ENCODE measurements at regions of chr1 and their contacts with region 1.

Region 1: GRCh38 chr1:151399890-151400495 is 620 bp downstream of the PSMB4 start:
- DNase-seq: no peak
- ATAC-seq: peak; percentile 34
- H3K4me3 ChIP-seq: peak overlapping the region; percentile 91
- H3K27ac ChIP-seq: peak overlapping the region; percentile 70
- H3K4me1 ChIP-seq: peaks cover 13% of the 10 kb centered on the region
- H3K27me3 ChIP-seq: no peaks in the 10 kb centered on the region
- CTCF ChIP-seq: no peak

Region 2: DNA sequence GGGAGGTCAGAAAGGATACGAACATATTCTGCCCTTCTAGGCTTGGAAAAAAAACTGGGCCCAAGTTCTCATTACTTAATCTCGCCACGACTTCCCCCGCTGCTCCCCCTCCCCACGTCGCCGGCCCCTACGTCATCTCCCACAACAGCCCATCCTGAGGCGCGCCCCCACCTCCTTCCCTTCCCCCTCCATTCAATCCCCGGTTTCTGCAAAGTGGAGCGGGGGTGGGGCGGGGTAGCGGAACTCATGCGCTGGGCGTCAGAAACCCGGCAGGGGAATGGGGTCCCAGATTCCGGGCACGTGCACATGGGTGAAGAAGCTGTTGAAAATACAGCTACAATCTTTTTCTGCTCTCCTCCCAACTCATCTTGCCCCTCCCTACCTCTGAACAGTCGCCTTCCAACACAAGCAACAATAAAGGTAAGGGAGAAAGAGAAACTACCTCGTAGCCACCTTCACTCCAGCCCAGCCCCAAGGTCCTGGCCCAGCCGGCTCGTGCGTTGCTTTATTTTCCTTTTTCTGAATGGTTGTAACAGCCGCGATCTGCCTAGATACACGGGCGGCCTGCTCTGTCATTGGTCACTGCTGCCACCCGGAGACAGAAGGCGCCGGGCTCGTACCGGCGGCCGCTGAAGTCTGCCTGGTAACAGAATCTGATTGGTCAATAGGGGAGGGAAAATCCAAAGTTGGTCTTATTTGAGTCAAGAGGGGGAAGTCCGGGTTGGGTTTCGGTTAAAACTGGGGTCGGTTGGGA is 53.0 kb before region 1 on chr1 and contains the start of gene RFX5:
- CTCF ChIA-PET with region 1: no interaction called
- POLR2A ChIA-PET with region 1: no interaction called
- intact Hi-C with region 1: loop called (anchors 1 kb)
- DNase-seq: peak; percentile 100
- ATAC-seq: peak; percentile 98
- H3K4me3 ChIP-seq: peak within 1 kb of the TSS; percentile 76
- H3K27ac ChIP-seq: peak within 1 kb of the TSS; percentile 85
- H3K4me1 ChIP-seq: peaks cover 14% of the 10 kb centered on the region
- H3K27me3 ChIP-seq: no peaks in the 10 kb centered on the region
- CTCF ChIP-seq: no peak
- total RNA-seq, gene RFX5: 34.1 and 41.0 TPM in 2 replicates